A673 (cell line): ENCODE measurements at regions of chr17 and their contacts with region 1.

Region 1: GRCh38 chr17:51461578-51462004 is 201.2 kb downstream of the UTP18 start:
- DNase-seq: peak; percentile 88
- H3K4me3 ChIP-seq: no peak overlapping the region
- H3K27ac ChIP-seq: no peak overlapping the region
- H3K4me1 ChIP-seq: no peaks in the 10 kb centered on the region
- H3K27me3 ChIP-seq: peaks cover 14% of the 10 kb centered on the region
- CTCF ChIP-seq: peak; percentile 98

Region 2: GRCh38 chr17:51372345-51373004 is 89.1 kb before region 1 on chr17:
- CTCF ChIA-PET with region 1: no interaction called
- POLR2A ChIA-PET with region 1: no interaction called
- intact Hi-C with region 1: no loop called
- DNase-seq: peak; percentile 88
- H3K4me3 ChIP-seq: no peak overlapping the region
- H3K27ac ChIP-seq: no peak overlapping the region
- H3K4me1 ChIP-seq: no peaks in the 10 kb centered on the region
- H3K27me3 ChIP-seq: no peaks in the 10 kb centered on the region
- CTCF ChIP-seq: no peak

Region 3: GRCh38 chr17:51540151-51540550 is 78.6 kb after region 1 on chr17:
- CTCF ChIA-PET with region 1: interaction called, 4 read pairs
- POLR2A ChIA-PET with region 1: no interaction called
- intact Hi-C with region 1: loop called (anchors 5 kb)
- DNase-seq: peak; percentile 9
- H3K4me3 ChIP-seq: no peak overlapping the region
- H3K27ac ChIP-seq: no peak overlapping the region
- H3K4me1 ChIP-seq: no peaks in the 10 kb centered on the region
- H3K27me3 ChIP-seq: peaks cover 13% of the 10 kb centered on the region
- CTCF ChIP-seq: 0 out of 2 replicates have a peak, but pooled peaks have one; percentile 27

Region 4: GRCh38 chr17:51601622-51602261 is 140.2 kb after region 1 on chr17:
- CTCF ChIA-PET with region 1: interaction called, 10 read pairs
- POLR2A ChIA-PET with region 1: no interaction called
- intact Hi-C with region 1: no loop called
- DNase-seq: no peak
- H3K4me3 ChIP-seq: no peak overlapping the region
- H3K27ac ChIP-seq: no peak overlapping the region
- H3K4me1 ChIP-seq: no peaks in the 10 kb centered on the region
- H3K27me3 ChIP-seq: peaks cover 18% of the 10 kb centered on the region
- CTCF ChIP-seq: no peak

Region 5: GRCh38 chr17:51640108-51640622 is 178.6 kb after region 1 on chr17:
- CTCF ChIA-PET with region 1: no interaction called
- POLR2A ChIA-PET with region 1: no interaction called
- intact Hi-C with region 1: loop called (anchors 10 kb)
- DNase-seq: peak; percentile 33
- H3K4me3 ChIP-seq: no peak overlapping the region
- H3K27ac ChIP-seq: no peak overlapping the region
- H3K4me1 ChIP-seq: no peaks in the 10 kb centered on the region
- H3K27me3 ChIP-seq: peaks cover 49% of the 10 kb centered on the region
- CTCF ChIP-seq: peak; percentile 62